ENCODE measurements at regions of chr2 and their contacts with region 1.

Region 1: GRCh38 chr2:16613539-16614011 is 52.1 kb downstream of the CYRIA start:
- DNase-seq: no peak
- H3K4me3 ChIP-seq: no peak overlapping the region
- H3K27ac ChIP-seq: peak overlapping the region; percentile 66
- H3K4me1 ChIP-seq: peaks cover 60% of the 10 kb centered on the region
- H3K27me3 ChIP-seq: peaks cover 20% of the 10 kb centered on the region
- CTCF ChIP-seq: peak; percentile 67

Region 2: GRCh38 chr2:16682431-16683118 is 69.0 kb after region 1 on chr2:
- intact Hi-C with region 1: no loop called
- DNase-seq: no peak
- H3K4me3 ChIP-seq: no peak overlapping the region
- H3K27ac ChIP-seq: no peak overlapping the region
- H3K4me1 ChIP-seq: no peaks in the 10 kb centered on the region
- H3K27me3 ChIP-seq: peaks cover 8% of the 10 kb centered on the region
- CTCF ChIP-seq: no peak

Region 3: GRCh38 chr2:16756831-16757644 is 143.5 kb after region 1 on chr2:
- intact Hi-C with region 1: loop called (anchors 5 kb)
- DNase-seq: peak; percentile 85
- H3K4me3 ChIP-seq: no peak overlapping the region
- H3K27ac ChIP-seq: peak overlapping the region; percentile 79
- H3K4me1 ChIP-seq: peaks cover 19% of the 10 kb centered on the region
- H3K27me3 ChIP-seq: peaks cover 4% of the 10 kb centered on the region
- CTCF ChIP-seq: peak; percentile 91

Measured in left ventricle myocardium inferior (tissue), 1 donor.